SK-N-SH (cell line): ENCODE measurements at regions of chr4 and their contacts with region 1.

Region 1: GRCh38 chr4:54233277-54233696 is 4.2 kb downstream of the PDGFRA start:
- DNase-seq: peak; percentile 91
- H3K4me3 ChIP-seq: peak overlapping the region; percentile 64 to 85
- H3K27ac ChIP-seq: peak overlapping the region; percentile 72 to 91
- H3K4me1 ChIP-seq: peaks cover 7 to 8% of the 10 kb centered on the region in 2 experiments; a peak in 3 of 4 replicates
- H3K27me3 ChIP-seq: no peaks in the 10 kb centered on the region
- CTCF ChIP-seq: peak; percentile 69
- EP300 ChIP-seq: 0 out of 4 replicates have a peak, but pooled peaks of 1 of the 2 experiments have one; percentile 20
- RAD21 ChIP-seq: peak; percentile 79

Region 2: DNA sequence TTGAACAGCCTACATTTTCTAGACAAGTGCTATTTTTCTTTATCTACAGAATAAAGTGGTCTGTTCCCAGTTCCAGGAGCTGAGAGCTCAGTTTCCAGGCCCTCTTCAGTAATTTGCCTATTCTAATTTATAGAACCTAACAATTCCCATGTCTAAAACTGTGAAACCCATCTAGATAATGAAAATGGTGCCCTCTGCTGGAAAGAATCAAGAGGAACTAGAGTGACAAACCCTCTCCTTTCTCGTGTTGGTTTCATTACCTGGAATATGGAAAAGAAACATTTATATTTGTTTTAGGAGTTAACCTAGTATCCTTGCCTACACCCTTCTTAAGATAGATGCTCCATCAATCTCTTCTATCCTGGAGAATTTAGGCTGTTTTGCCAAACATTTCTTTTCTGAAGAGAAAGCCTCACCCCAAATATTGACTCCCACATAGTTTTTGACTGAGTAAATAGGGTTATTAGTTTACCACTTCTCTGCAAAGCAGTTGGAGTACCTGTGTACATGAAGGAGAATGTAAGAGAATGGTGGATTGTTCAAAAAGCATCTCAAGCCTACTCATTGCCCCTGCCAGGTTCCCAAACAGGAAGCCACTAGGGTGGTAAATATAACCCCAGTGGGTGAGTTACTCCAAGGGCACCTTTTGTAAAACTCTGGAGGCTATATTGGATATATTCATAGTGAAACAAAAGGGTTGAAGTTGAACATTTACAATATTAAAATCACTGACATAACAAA is 1249.6 kb before region 1 on chr4:
- CTCF ChIA-PET with region 1: interaction called, 37 read pairs
- POLR2A ChIA-PET with region 1: no interaction called
- DNase-seq: peak; percentile 49
- H3K4me3 ChIP-seq: no peak overlapping the region; a peak in 1 of 4 replicates
- H3K27ac ChIP-seq: peak overlapping the region in 1 of 2 experiments; percentile 80; a peak in 2 of 4 replicates
- H3K4me1 ChIP-seq: peaks cover 0 to 42% of the 10 kb centered on the region in 2 experiments; a peak in 2 of 4 replicates
- H3K27me3 ChIP-seq: no peaks in the 10 kb centered on the region
- CTCF ChIP-seq: peak; percentile 81
- EP300 ChIP-seq: no peak
- RAD21 ChIP-seq: peak; percentile 77

Region 3: DNA sequence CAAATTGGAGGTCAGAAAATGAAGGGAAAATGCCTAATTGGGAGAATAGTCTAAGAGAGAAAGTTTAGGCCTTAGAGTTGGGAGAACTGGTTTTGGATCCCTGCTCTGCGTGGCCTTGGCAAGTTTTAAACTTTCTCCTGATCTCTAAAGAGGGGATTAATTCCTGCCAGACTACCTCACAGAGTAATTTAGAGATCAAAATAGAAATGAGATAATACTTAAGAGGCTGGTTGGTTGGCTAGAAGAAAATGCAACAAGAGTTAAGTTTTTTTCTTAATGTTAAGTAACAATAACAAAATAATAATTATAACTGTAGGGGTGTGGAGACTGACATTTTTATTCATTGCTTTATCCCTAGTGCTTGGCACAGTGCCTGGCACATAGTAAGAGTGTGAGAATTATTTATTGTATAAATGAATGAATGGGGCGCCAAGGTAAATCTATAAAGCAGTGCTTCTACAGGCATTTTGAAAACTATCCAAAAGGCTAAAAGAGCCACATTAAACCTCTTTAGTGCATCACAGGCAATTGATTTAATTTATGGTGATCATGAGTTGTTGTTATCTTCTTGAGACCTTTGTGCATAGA is 1210.7 kb before region 1 on chr4:
- CTCF ChIA-PET with region 1: interaction called, 128 read pairs
- POLR2A ChIA-PET with region 1: no interaction called
- DNase-seq: no peak
- H3K4me3 ChIP-seq: no peak overlapping the region
- H3K27ac ChIP-seq: peak overlapping the region in 1 of 2 experiments; percentile 99; a peak in 2 of 4 replicates
- H3K4me1 ChIP-seq: peaks cover 12 to 44% of the 10 kb centered on the region in 2 experiments; a peak in 3 of 4 replicates
- H3K27me3 ChIP-seq: no peaks in the 10 kb centered on the region
- CTCF ChIP-seq: no peak
- EP300 ChIP-seq: no peak
- RAD21 ChIP-seq: no peak

Region 4: GRCh38 chr4:53221832-53222480 is 1011.3 kb before region 1 on chr4:
- CTCF ChIA-PET with region 1: interaction called, 14 read pairs
- POLR2A ChIA-PET with region 1: no interaction called
- DNase-seq: no peak
- H3K4me3 ChIP-seq: no peak overlapping the region
- H3K27ac ChIP-seq: peak overlapping the region in 1 of 2 experiments; percentile 43; a peak in 2 of 4 replicates
- H3K4me1 ChIP-seq: peaks cover 0 to 11% of the 10 kb centered on the region in 2 experiments; a peak in 2 of 4 replicates
- H3K27me3 ChIP-seq: no peaks in the 10 kb centered on the region
- CTCF ChIP-seq: no peak
- EP300 ChIP-seq: no peak
- RAD21 ChIP-seq: no peak

Region 5: GRCh38 chr4:53702334-53703266 is 530.7 kb before region 1 on chr4:
- CTCF ChIA-PET with region 1: interaction called, 26 read pairs
- POLR2A ChIA-PET with region 1: interaction called, 5 read pairs
- DNase-seq: peak; percentile 84
- H3K4me3 ChIP-seq: peak overlapping the region; percentile 4 to 22; a peak in 2 of 4 replicates
- H3K27ac ChIP-seq: peak overlapping the region; percentile 81 to 99
- H3K4me1 ChIP-seq: peaks cover 24 to 40% of the 10 kb centered on the region in 2 experiments
- H3K27me3 ChIP-seq: no peaks in the 10 kb centered on the region
- CTCF ChIP-seq: peak; percentile 20; the same call in 1 of the 2 replicates
- EP300 ChIP-seq: peak; percentile 22 to 38; a peak in 2 of 4 replicates
- RAD21 ChIP-seq: peak; percentile 20

Region 6: GRCh38 chr4:53929955-53930798 is 303.1 kb before region 1 on chr4:
- CTCF ChIA-PET with region 1: interaction called, 77 read pairs
- POLR2A ChIA-PET with region 1: interaction called, 3 read pairs
- DNase-seq: peak; percentile 61
- H3K4me3 ChIP-seq: peak overlapping the region in 1 of 2 experiments; percentile 7; a peak in 1 of 4 replicates
- H3K27ac ChIP-seq: peak overlapping the region in 1 of 2 experiments; percentile 84; a peak in 2 of 4 replicates
- H3K4me1 ChIP-seq: peaks cover 3 to 30% of the 10 kb centered on the region in 2 experiments
- H3K27me3 ChIP-seq: no peaks in the 10 kb centered on the region
- CTCF ChIP-seq: peak; percentile 85
- EP300 ChIP-seq: no peak; a peak in 1 of 4 replicates
- RAD21 ChIP-seq: peak; percentile 92

Region 7: GRCh38 chr4:54139332-54139731 is 94.0 kb before region 1 on chr4:
- CTCF ChIA-PET with region 1: no interaction called
- POLR2A ChIA-PET with region 1: no interaction called
- DNase-seq: no peak
- H3K4me3 ChIP-seq: no peak overlapping the region
- H3K27ac ChIP-seq: no peak overlapping the region
- H3K4me1 ChIP-seq: no peaks in the 10 kb centered on the region; a peak in 1 of 4 replicates
- H3K27me3 ChIP-seq: no peaks in the 10 kb centered on the region
- CTCF ChIP-seq: no peak
- EP300 ChIP-seq: no peak
- RAD21 ChIP-seq: no peak

Region 8: GRCh38 chr4:54209617-54210016 is 23.7 kb before region 1 on chr4:
- CTCF ChIA-PET with region 1: interaction called, 12 read pairs
- POLR2A ChIA-PET with region 1: no interaction called
- DNase-seq: no peak
- H3K4me3 ChIP-seq: no peak overlapping the region
- H3K27ac ChIP-seq: no peak overlapping the region
- H3K4me1 ChIP-seq: no peaks in the 10 kb centered on the region
- H3K27me3 ChIP-seq: no peaks in the 10 kb centered on the region
- CTCF ChIP-seq: no peak
- EP300 ChIP-seq: no peak
- RAD21 ChIP-seq: no peak

Region 9: GRCh38 chr4:54586320-54586955 is 353.2 kb after region 1 on chr4:
- CTCF ChIA-PET with region 1: no interaction called
- POLR2A ChIA-PET with region 1: no interaction called
- DNase-seq: no peak
- H3K4me3 ChIP-seq: no peak overlapping the region
- H3K27ac ChIP-seq: no peak overlapping the region
- H3K4me1 ChIP-seq: no peaks in the 10 kb centered on the region
- H3K27me3 ChIP-seq: no peaks in the 10 kb centered on the region
- CTCF ChIP-seq: no peak
- EP300 ChIP-seq: no peak
- RAD21 ChIP-seq: no peak

Region 10: GRCh38 chr4:54971474-54971950 is 738.2 kb after region 1 on chr4:
- CTCF ChIA-PET with region 1: no interaction called
- POLR2A ChIA-PET with region 1: no interaction called
- DNase-seq: peak; percentile 43
- H3K4me3 ChIP-seq: peak overlapping the region in 1 of 2 experiments; percentile 28; a peak in 1 of 4 replicates
- H3K27ac ChIP-seq: no peak overlapping the region
- H3K4me1 ChIP-seq: peaks cover 0 to 2% of the 10 kb centered on the region in 2 experiments; a peak in 1 of 4 replicates
- H3K27me3 ChIP-seq: no peaks in the 10 kb centered on the region; the same call in 1 of the 2 replicates
- CTCF ChIP-seq: peak; percentile 95
- EP300 ChIP-seq: no peak
- RAD21 ChIP-seq: peak; percentile 81